Dorsolateral prefrontal cortex (tissue), 120 donors: ENCODE measurements at regions of chr12 and their contacts with region 1.

Region 1: DNA sequence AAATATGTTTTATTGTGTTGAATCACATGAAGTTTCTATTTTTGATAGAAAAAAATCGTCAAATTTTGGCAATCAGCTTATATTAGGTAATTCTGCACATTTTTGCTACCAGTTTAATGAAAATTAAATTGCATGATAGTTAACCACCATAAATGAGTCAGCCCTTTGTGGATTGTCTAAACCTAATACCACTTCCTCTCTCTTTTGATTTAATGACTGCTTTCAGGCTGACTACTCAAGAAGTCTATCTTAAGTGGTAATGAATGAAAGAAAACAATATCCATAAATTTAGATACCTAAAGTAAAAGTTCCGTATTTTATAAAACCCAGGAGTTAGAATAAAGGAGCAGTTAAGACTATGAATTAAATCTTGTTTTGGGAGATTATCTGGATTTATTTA is 450.5 kb downstream of the TMEM117 start:
- DNase-seq: no peak
- H3K4me3 ChIP-seq: no peak overlapping the region
- H3K27ac ChIP-seq: peak overlapping the region in 1 of 59 donors; percentile 31
- H3K27me3 ChIP-seq: no peaks in the 10 kb centered on the region
- CTCF ChIP-seq: no peak

Region 2: DNA sequence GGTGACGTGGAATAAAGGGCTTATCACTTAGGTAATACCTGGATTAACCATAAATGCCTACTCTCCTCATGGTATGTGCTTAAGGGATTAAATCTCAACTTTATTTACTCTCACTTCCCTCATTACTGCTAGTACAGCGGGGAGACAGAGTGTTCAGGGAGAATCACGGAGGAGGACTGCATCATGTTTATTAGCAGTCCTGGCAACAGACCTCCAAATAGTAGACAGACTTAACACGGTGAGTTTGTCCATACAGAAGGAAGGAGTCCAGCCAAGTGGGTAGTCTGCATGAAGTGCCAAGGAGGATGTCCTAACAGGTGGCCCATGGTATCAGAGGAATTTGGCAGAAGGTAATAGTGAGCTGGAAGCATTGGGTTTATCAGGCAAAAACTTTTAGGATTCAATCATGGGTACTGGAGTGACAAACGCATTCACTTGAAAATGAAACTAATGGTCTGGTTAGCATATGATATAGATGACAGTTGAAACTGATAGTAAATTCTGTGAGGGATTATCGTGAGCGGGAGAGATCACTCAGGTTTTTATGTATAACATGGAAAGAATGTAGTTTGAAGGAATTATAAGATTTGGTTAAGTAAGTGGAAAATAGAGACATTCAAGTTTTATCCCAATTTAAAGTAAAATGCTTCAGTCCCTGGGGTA is 21.3 kb after region 1 on chr12:
- intact Hi-C with region 1: loop called in 1 of 2 experiments (anchors 2 kb)
- DNase-seq: no peak
- H3K4me3 ChIP-seq: no peak overlapping the region
- H3K27ac ChIP-seq: no peak overlapping the region
- H3K27me3 ChIP-seq: no peaks in the 10 kb centered on the region
- CTCF ChIP-seq: no peak